Right lobe of liver (tissue), 6 donors: ENCODE measurements at regions of chr11 and their contacts with region 1.

Region 1: DNA sequence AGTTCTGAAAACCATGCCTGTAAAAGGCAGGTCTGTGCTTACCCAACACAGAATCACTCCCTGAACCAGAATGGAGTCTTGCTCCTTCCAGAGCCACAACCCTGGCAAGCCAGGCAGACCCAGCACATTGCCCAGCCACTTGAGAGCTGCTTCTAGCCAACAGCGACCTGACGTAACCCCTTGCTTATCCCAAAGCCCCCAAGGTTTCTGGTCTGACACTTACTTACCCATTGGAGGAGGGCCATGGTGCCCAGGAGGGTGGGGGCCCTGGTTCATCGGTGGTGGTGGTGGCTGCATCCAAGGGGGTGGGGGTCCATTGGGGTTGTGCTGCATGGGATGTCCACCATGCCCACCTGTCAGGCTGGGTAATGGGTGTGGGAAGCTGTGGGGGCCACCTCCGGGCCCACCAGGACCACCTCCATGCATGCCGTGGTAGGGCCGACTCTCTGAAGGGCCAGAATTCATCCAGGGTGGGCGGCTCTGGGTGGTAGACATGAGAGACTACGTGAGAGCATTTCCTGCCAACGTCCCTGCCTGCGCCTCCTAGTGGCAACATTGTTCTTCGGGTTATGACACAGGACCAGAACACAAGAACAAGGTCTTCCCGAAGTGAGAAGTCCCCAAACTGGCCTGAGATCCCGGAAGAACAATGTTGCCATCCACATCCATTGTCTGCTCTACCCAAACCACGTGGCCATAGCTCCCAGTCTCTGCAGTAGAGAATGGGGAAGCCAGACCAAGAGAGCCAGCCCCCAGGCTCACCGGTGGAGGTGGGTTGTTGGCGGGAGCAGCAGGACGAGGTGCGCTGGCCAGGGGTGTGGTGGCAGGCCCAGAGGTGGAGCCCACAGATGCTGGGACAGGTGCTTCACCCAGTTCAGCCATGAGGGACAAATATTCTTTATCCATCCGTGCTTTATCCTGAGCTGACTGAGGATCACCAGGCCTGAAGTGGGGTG is 7.8 kb upstream of the PYGM start:
- DNase-seq: peak in 1 of 3 donors; percentile 59
- ATAC-seq: peak; percentile 35 to 53 (median 42)
- H3K4me3 ChIP-seq: no peak overlapping the region
- H3K27ac ChIP-seq: no peak overlapping the region
- H3K4me1 ChIP-seq: no peaks in the 10 kb centered on the region
- H3K27me3 ChIP-seq: no peaks in the 10 kb centered on the region
- CTCF ChIP-seq: peak; percentile 60 to 70 (median 62)
- POLR2A ChIP-seq: no peak

Region 2: DNA sequence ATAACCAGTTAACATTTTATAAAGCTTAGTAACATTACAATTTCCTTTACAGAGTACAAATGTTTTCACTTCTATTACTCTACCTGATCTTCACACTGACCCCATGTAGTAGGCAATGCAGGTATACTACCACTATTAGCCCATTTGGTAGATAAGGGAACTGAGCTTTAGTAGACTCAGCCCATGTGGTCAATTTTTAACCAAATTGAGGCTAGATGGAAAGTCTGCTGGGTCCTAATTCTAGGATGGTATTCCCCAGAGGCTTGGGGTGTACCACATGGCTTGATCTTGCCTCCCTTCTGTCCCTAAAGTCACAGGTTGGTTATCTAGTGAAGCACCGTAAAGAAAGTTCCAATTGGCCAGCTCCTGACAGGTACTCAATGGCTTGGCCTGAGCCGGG is 92.8 kb before region 1 on chr11:
- intact Hi-C with region 1: no loop called
- DNase-seq: no peak
- ATAC-seq: no peak
- H3K4me3 ChIP-seq: no peak overlapping the region
- H3K27ac ChIP-seq: no peak overlapping the region
- H3K4me1 ChIP-seq: peaks cover 0 to 15% (median 0%) of the 10 kb centered on the region in 4 donors
- H3K27me3 ChIP-seq: no peaks in the 10 kb centered on the region
- CTCF ChIP-seq: no peak
- POLR2A ChIP-seq: no peak

Region 3: GRCh38 chr11:64688534-64688982 is 79.1 kb before region 1 on chr11:
- intact Hi-C with region 1: loop called in 1 of 2 experiments (anchors 10 kb)
- DNase-seq: peak; percentile 86 to 87 (median 86)
- ATAC-seq: peak; percentile 88 to 95 (median 94)
- H3K4me3 ChIP-seq: peak overlapping the region in 1 of 3 donors; percentile 32
- H3K27ac ChIP-seq: no peak overlapping the region
- H3K4me1 ChIP-seq: peaks cover 0 to 9% (median 2%) of the 10 kb centered on the region in 4 donors
- H3K27me3 ChIP-seq: no peaks in the 10 kb centered on the region
- CTCF ChIP-seq: peak; percentile 78 to 95 (median 92)
- POLR2A ChIP-seq: no peak

Region 4: DNA sequence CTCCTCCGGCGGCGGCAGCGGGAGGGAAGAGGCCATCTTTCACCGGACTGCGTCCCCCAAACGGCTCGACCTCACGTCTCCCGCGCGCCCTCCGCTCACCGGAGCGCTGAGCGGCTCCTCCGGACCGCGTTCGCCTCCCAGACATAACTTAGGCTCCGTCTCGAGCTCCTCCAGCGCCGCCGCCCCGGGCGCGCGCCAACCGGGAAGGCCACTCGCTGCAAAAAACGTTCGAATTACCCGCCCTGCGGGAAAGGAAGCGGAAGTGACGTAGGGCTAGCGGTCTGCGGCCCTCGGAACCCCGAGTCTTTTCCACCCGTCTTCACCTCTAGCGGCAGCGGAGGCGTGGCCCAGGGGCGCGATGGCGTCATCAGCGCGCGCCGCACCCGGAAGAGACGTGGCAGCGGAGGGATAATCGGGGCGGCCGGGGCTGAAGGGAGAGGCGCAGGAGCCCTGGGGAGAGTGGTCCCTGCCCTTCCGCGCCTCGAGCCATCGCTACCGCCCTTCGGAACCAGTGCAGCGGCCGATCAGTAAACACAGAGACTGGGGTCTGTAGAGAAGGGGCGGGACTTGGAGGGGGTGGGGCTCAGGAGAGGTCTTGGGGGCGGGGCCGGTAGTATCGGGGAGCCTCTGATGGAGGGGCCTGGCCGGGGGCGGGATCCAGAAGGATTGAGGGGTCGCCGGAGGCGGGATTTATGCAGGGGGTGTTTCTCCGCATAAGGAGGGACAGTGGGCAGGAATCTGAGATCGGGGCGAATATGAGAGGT is 316.4 kb after region 1 on chr11 and contains the starts of genes CDCA5 and ZFPL1:
- intact Hi-C with region 1: no loop called
- DNase-seq: peak; percentile 92 to 96 (median 96)
- ATAC-seq: peak; percentile 89 to 97 (median 96)
- H3K4me3 ChIP-seq: peak within 1 kb of the TSS; percentile 69 to 80 (median 73)
- H3K27ac ChIP-seq: peak within 1 kb of the TSS; percentile 59 to 91 (median 83)
- H3K4me1 ChIP-seq: peaks cover 0 to 16% (median 4%) of the 10 kb centered on the region in 4 donors
- H3K27me3 ChIP-seq: no peaks in the 10 kb centered on the region
- CTCF ChIP-seq: no peak
- POLR2A ChIP-seq: no peak
- total RNA-seq, gene CDCA5: 0.31 to 2.3 (median 1.0) TPM
- total RNA-seq, gene ZFPL1: 15.4 to 22.4 (median 18.0) TPM